Heart right ventricle (tissue), 16 donors: ENCODE measurements at regions of chr7 and their contacts with region 1.

Region 1: DNA sequence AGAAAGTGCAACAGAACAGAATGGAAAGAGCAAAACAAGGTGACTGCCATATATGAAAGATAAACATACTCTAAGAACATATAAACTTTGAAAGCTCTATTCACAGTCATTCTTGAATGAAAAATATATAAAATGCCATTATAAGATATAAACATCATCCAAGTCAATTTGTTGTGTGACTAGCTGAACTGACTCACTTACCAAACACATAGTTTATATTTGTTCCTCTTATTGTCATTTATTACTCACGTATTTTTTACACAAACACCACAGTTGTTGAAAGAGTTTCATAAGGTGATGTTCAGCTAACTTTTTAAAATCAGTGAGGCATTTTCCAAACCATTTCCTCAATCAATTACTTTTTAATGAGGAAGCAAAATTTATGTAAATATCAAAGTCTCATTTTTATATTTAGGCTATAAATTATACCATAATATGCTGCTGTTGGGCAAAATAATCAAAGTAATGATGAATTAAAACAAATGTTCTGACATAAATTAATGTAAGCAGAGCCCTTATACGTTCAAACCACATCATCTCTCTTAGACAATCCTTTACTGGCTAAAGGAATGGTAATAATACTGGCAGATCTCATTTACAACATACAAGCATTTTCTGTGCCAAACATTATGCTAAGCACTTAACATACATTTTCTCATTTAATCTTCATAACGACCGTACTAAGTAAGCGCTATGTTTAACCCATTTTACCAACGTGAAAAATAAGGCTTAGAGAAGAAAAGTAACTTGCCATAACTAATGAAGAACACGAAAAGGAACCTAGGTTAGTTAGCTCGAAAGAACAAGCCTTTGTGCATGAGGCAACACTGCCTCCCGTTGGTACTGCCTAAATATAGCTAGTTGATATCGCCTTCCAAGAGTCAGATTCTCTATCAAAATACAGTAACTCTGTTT is 7.3 kb downstream of the LRRN3 start:
- DNase-seq: peak; percentile 10 to 11
- ATAC-seq: peak in 6 of 8 donors; percentile 52 to 74 (median 64)
- H3K4me3 ChIP-seq: no peak overlapping the region
- H3K27ac ChIP-seq: no peak overlapping the region
- H3K4me1 ChIP-seq: peaks cover 0 to 7% (median 0%) of the 10 kb centered on the region in 9 donors
- H3K27me3 ChIP-seq: no peaks in the 10 kb centered on the region
- CTCF ChIP-seq: peak; percentile 46 to 81 (median 70)

Region 2: DNA sequence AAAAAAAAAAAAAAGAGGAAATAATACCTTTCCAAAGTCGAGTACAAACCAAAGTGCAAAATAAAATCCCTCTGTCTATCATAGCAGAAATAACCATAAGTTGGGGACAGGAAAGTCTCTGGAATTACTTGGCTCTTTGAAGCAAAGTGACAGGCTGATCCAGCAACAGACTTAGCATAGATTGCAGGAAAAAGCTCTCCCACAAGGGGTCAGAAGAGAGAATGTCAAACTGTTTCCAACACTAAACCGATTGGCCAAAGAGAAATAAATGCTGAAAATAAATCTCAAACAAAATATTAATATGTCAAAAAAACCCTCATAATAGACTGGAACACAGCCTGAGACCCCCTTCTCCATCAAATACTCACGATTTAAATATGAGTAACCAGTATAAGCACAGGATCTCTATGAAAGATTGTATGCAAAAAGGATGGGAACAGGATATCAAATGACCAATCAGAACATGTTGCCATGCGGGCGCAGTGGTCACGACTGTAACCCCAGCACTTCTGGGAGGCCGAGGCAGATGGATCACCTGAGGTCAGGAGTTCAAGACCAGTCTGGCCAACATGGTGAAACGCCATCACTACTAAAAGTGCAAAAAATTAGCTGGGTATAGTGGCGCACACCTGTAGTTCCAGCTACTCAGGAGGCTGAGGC is 1008.0 kb before region 1 on chr7:
- intact Hi-C with region 1: loop called in 1 of 10 experiments (anchors 10 kb)
- DNase-seq: no peak
- ATAC-seq: no peak
- H3K4me3 ChIP-seq: no peak overlapping the region
- H3K27ac ChIP-seq: no peak overlapping the region
- H3K4me1 ChIP-seq: no peaks in the 10 kb centered on the region
- H3K27me3 ChIP-seq: no peaks in the 10 kb centered on the region
- CTCF ChIP-seq: peak in 5 of 9 donors; percentile 27 to 48 (median 34)

Region 3: DNA sequence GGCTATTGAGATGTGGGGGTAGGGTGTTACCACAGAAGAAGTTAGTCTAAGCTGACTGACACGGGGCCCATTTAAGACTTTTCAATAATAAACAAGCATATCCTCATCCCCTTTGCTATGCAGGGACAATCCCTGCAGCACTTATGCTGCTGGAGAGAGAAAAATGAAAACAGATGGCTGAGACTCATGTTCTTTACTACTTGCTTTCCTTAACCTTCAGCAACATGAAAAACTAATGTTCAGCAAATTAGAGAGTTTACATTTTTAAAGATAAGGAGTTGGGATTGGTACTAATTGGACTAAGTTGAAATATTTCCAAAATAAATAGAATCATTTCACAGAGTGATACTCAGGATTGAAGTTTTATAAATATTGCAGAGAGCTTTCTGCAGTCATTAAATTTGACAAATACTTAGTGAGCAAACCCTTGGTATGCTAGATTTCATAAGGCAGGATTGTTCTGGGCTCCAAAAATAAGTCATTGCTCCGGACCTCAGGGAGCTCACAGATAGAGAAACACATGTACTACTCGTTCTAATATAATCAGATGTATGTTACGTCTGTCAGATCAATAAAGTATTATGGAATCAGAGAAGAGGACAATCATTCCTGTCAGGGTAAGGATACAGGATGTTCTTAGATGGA is 154.4 kb before region 1 on chr7:
- intact Hi-C with region 1: loop called in 1 of 10 experiments (anchors 10 kb)
- DNase-seq: no peak
- ATAC-seq: no peak
- H3K4me3 ChIP-seq: no peak overlapping the region
- H3K27ac ChIP-seq: no peak overlapping the region
- H3K4me1 ChIP-seq: peaks cover 0 to 33% (median 8%) of the 10 kb centered on the region in 9 donors
- H3K27me3 ChIP-seq: no peaks in the 10 kb centered on the region
- CTCF ChIP-seq: no peak

Region 4: GRCh38 chr7:111045449-111045848 is 52.8 kb before region 1 on chr7:
- intact Hi-C with region 1: no loop called
- DNase-seq: peak in 1 of 2 donors; percentile 6
- ATAC-seq: peak in 3 of 8 donors; percentile 63 to 64 (median 63)
- H3K4me3 ChIP-seq: no peak overlapping the region
- H3K27ac ChIP-seq: no peak overlapping the region
- H3K4me1 ChIP-seq: no peaks in the 10 kb centered on the region
- H3K27me3 ChIP-seq: no peaks in the 10 kb centered on the region
- CTCF ChIP-seq: no peak

Region 5: DNA sequence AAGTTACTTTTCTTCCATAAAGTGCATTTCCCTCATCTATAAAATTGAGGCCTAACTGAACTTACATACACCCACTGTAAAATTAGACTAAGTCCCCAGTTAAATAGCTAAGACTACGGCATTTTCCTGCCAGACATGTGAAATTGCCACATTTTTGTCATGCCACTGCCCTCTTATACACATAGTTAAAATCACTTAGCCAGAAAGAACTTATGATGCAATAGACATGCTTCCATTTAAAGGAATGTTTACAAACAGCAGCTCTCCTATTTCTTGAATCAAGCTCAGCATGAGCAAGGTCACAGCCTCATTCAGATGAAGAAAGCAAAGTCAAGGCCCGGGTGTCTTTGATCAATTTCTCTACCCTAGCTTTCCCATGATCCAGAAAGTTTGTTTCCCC is 168.3 kb after region 1 on chr7:
- intact Hi-C with region 1: loop called in 1 of 10 experiments (anchors 10 kb)
- DNase-seq: no peak
- ATAC-seq: no peak
- H3K4me3 ChIP-seq: no peak overlapping the region
- H3K27ac ChIP-seq: no peak overlapping the region
- H3K4me1 ChIP-seq: peaks cover 0 to 18% (median 6%) of the 10 kb centered on the region in 9 donors
- H3K27me3 ChIP-seq: no peaks in the 10 kb centered on the region
- CTCF ChIP-seq: no peak

Region 6: GRCh38 chr7:111312964-111313363 is 214.7 kb after region 1 on chr7:
- intact Hi-C with region 1: no loop called
- DNase-seq: no peak
- ATAC-seq: no peak
- H3K4me3 ChIP-seq: no peak overlapping the region
- H3K27ac ChIP-seq: no peak overlapping the region
- H3K4me1 ChIP-seq: peaks cover 0 to 5% (median 0%) of the 10 kb centered on the region in 9 donors
- H3K27me3 ChIP-seq: no peaks in the 10 kb centered on the region
- CTCF ChIP-seq: peak in 2 of 9 donors; percentile 27 to 31

Region 7: GRCh38 chr7:111561885-111562732 is 463.8 kb after region 1 on chr7 and contains the start of gene IMMP2L:
- intact Hi-C with region 1: loop called in 1 of 10 experiments (anchors 10 kb)
- DNase-seq: peak; percentile 89 to 93
- ATAC-seq: peak; percentile 98 to 100 (median 99)
- H3K4me3 ChIP-seq: peak within 1 kb of the TSS; percentile 73 to 95 (median 83)
- H3K27ac ChIP-seq: peak within 1 kb of the TSS; percentile 66 to 94 (median 90)
- H3K4me1 ChIP-seq: peaks cover 6 to 24% (median 17%) of the 10 kb centered on the region in 9 donors
- H3K27me3 ChIP-seq: peaks cover 0 to under 1% (median 0%) of the 10 kb centered on the region in 7 donors
- CTCF ChIP-seq: peak in 7 of 9 donors; percentile 29 to 64 (median 51)
- total RNA-seq, gene IMMP2L: 12.4 to 20.8 (median 17.5) TPM